GM12878 (cell line): ENCODE measurements at regions of chr7 and their contacts with region 1.

Region 1: GRCh38 chr7:117435475-117436043 is 8.3 kb upstream of the ASZ1 start:
- DNase-seq: peak; percentile 73
- ATAC-seq: peak; percentile 99
- H3K4me3 ChIP-seq: no peak overlapping the region
- H3K27ac ChIP-seq: no peak overlapping the region; the same call in 1 of the 2 replicates
- H3K4me1 ChIP-seq: peaks cover 9% of the 10 kb centered on the region
- H3K27me3 ChIP-seq: no peaks in the 10 kb centered on the region
- CTCF ChIP-seq: no peak
- EP300 ChIP-seq: peak; percentile 73 to 81; a peak in 3 of 4 replicates
- POLR2A ChIP-seq: no peak
- RAD21 ChIP-seq: no peak

Region 2: DNA sequence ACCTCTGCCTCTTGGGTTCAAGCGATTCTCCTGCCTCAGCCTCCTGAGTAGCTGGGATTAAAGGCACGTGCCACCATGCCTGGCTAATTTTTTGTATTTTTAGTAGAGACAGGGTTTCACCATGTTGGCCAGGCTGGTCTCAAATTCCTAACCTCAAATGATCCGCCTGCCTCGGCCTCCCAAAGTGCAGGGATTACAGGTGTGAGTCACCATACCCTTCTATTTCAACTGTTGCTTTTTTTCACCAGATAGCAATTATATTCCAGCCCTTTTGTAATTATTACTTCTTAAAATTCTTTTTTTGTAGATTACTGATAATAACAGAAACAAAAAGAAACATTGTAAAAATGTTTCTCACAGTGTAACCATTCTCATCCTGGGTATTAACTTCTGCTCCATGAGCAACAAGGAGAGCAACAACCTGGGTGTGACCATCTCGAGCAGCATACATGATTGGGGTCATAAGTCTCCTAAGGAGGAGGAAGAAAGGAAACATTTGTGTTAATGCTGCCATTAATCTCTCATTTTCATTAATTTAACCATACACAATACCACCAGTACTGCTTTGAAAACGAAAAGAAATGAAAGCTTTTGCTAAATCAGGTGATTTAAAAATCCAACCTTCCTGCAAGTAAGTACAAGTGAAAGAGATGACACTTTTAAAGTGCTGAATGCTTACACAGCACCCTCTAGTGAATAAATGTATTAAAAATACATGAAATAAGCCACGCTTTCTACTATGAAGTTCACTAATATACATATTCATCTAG is 50.0 kb before region 1 on chr7:
- CTCF ChIA-PET with region 1: no interaction called
- POLR2A ChIA-PET with region 1: no interaction called
- RAD21 ChIA-PET with region 1: no interaction called
- SMC1A ChIA-PET with region 1: no interaction called
- in situ Hi-C with region 1: no loop called
- intact Hi-C with region 1: no loop called
- DNase-seq: no peak
- ATAC-seq: peak; percentile 90
- H3K4me3 ChIP-seq: no peak overlapping the region
- H3K27ac ChIP-seq: no peak overlapping the region
- H3K4me1 ChIP-seq: no peaks in the 10 kb centered on the region
- H3K27me3 ChIP-seq: no peaks in the 10 kb centered on the region
- CTCF ChIP-seq: peak; percentile 25 to 68 (median 46); a peak in 4 of 6 replicates
- EP300 ChIP-seq: no peak
- POLR2A ChIP-seq: no peak
- RAD21 ChIP-seq: peak; percentile 75

Region 3: DNA sequence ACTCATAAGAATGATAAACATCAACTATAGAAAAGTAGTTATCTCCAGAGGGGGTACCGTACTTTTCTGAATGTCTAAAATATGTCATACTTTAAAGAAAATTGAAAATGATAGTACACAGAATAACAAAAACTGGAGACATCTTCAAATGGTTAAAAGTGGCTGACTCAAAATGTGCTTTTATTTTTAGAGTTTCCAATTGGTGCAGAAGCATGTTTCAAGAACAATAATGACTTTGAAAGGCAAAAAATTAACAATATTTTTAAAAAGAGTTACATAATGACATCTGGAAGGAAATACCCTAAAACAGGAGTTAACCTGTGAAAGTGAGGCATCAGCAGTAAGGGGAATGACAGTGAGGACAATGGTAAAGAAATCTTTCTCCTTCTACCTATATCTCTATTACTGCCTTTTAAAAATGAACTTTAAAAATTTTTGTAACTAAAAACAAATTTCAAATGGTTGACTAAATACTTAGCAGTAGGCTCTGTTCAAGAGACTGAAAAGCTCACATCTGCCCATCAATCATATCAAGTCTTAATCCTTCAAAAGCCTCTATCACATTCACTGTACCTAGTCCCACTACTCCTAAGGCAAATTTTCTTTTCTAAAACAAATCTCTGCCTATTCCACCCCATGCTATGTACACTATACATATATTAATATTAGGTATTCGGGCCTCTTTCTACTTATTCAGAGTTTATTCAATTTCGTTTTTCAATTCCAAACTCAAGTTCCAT is 11.3 kb before region 1 on chr7:
- CTCF ChIA-PET with region 1: interaction called, 8 read pairs
- POLR2A ChIA-PET with region 1: interaction called, 6 read pairs
- RAD21 ChIA-PET with region 1: interaction called, 40 read pairs
- SMC1A ChIA-PET with region 1: interaction called, 39 read pairs
- in situ Hi-C with region 1: no loop called
- intact Hi-C with region 1: no loop called
- DNase-seq: peak; percentile 24
- ATAC-seq: peak; percentile 88
- H3K4me3 ChIP-seq: no peak overlapping the region
- H3K27ac ChIP-seq: peak overlapping the region; percentile 27; the same call in 1 of the 2 replicates
- H3K4me1 ChIP-seq: no peaks in the 10 kb centered on the region
- H3K27me3 ChIP-seq: no peaks in the 10 kb centered on the region
- CTCF ChIP-seq: no peak
- EP300 ChIP-seq: peak; percentile 72 to 80; a peak in 2 of 4 replicates
- POLR2A ChIP-seq: no peak
- RAD21 ChIP-seq: no peak